ENCODE measurements at regions of chr15 and their contacts with region 1.

Region 1: DNA sequence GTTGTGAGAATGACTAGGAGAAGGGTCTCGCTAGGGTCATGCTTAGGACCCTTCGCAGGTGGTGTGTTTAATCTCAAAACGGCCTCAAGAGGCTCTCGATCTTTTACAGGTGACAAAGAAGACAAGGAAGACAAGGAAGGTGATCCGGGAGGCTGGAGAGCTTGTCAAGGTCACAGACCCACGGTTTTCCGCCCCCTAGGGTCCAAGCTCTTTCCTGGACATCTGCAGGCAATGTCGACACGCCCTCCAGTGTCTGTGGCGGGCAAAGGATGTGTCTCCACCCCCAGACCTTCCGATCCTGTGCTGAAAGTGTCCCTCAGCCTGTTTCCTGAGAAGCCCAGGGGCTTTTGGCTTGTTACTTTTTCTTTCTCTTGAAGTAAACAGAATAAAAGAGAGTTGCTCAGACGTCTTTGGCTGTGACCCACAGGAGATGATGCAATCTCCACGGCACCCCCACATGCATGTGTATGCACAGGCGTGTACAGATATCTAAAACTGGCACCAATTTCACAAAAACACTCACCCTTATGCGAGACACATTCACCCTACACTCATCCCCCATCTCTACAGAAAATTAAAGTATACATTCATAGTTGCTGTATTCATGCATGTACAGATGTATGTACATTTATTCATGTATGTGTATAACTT is 108.8 kb downstream of the KLF13 start:
- DNase-seq: peak; percentile 84 to 95 (median 86)
- H3K4me3 ChIP-seq: peak overlapping the region; percentile 25 to 74
- H3K4me3 Mint-ChIP-seq: peak overlapping the region; percentile 82 to 92 (median 87)
- H3K27ac ChIP-seq: peak overlapping the region; percentile 86
- H3K27ac Mint-ChIP-seq: peak overlapping the region; percentile 93 to 99 (median 98)
- H3K4me1 ChIP-seq: peaks cover 74% of the 10 kb centered on the region
- H3K4me1 Mint-ChIP-seq: peaks cover 58 to 87% (median 69%) of the 10 kb centered on the region in 4 donors
- H3K27me3 ChIP-seq: no peaks in the 10 kb centered on the region
- H3K27me3 Mint-ChIP-seq: no peaks in the 10 kb centered on the region

Region 2: GRCh38 chr15:31200735-31201151 is 234.6 kb before region 1 on chr15:
- CTCF ChIA-PET with region 1: interaction called, 34 read pairs
- POLR2A ChIA-PET with region 1: interaction called, 12 read pairs
- intact Hi-C with region 1: loop called (anchors 1 kb)
- DNase-seq: peak; percentile 70 to 73 (median 71)
- H3K4me3 ChIP-seq: no peak overlapping the region
- H3K4me3 Mint-ChIP-seq: peak overlapping the region in 2 of 8 donors; percentile 20 to 26
- H3K27ac ChIP-seq: no peak overlapping the region
- H3K27ac Mint-ChIP-seq: peak overlapping the region in 4 of 7 donors; percentile 18 to 87 (median 38)
- H3K4me1 ChIP-seq: peaks cover 26% of the 10 kb centered on the region
- H3K4me1 Mint-ChIP-seq: peaks cover 9 to 30% (median 15%) of the 10 kb centered on the region in 4 donors
- H3K27me3 ChIP-seq: no peaks in the 10 kb centered on the region
- H3K27me3 Mint-ChIP-seq: no peaks in the 10 kb centered on the region

Region 3: GRCh38 chr15:31241888-31242522 is 193.4 kb before region 1 on chr15:
- CTCF ChIA-PET with region 1: no interaction called
- POLR2A ChIA-PET with region 1: interaction called, 11 read pairs
- intact Hi-C with region 1: no loop called
- DNase-seq: peak in 4 of 5 donors; percentile 54 to 83 (median 74)
- H3K4me3 ChIP-seq: no peak overlapping the region
- H3K4me3 Mint-ChIP-seq: peak overlapping the region in 5 of 8 donors; percentile 41 to 73 (median 63)
- H3K27ac ChIP-seq: peak overlapping the region; percentile 0
- H3K27ac Mint-ChIP-seq: peak overlapping the region in 6 of 7 donors; percentile 79 to 98 (median 94)
- H3K4me1 ChIP-seq: peaks cover 29% of the 10 kb centered on the region
- H3K4me1 Mint-ChIP-seq: peaks cover 24 to 50% (median 35%) of the 10 kb centered on the region in 4 donors
- H3K27me3 ChIP-seq: no peaks in the 10 kb centered on the region
- H3K27me3 Mint-ChIP-seq: no peaks in the 10 kb centered on the region

Region 4: DNA sequence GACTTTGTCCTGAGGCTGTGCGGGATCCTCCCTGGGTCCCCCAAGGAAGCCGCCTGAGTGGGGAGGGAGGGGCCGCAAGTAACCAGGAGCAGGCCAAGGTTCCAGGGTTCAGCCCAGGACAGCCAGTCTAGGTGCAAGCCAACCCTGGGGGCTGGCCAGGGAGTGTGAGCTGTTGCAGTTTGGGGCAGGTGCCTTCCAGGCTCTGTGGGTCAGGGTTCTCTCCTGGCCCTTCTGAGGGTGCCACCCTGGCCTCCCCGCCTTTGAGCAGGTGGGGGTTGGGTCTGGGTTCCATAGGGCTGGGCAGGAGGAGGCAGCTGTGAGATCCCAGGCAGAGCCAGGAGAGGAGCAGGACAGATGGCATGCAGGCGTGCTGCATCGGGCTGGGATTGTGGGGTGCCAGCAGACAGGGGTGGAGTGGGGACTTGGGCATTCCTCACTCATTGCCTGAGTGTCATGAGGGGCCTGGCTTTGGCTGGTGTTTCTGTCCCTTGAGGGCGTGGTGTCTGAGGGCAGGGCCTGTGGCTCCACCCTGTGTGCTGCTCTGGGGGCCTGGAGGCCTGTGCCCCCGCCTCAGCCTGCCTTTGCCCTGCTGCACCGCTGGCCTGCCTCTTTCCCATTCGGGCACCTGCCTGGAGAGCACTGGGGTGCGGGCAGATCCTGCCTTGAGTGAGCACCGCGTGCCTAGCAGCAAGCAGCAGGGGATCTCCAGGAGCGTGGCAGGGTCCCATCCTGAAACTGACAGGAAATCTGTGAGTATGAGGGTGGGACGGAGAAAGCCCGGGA is 90.4 kb before region 1 on chr15:
- CTCF ChIA-PET with region 1: interaction called, 10 read pairs
- POLR2A ChIA-PET with region 1: interaction called, 42 read pairs
- intact Hi-C with region 1: no loop called
- DNase-seq: peak in 1 of 5 donors; percentile 47
- H3K4me3 ChIP-seq: peak overlapping the region; percentile 54 to 60
- H3K4me3 Mint-ChIP-seq: peak overlapping the region; percentile 83 to 95 (median 90)
- H3K27ac ChIP-seq: peak overlapping the region; percentile 74
- H3K27ac Mint-ChIP-seq: peak overlapping the region; percentile 84 to 99 (median 98)
- H3K4me1 ChIP-seq: peaks cover 100% of the 10 kb centered on the region
- H3K4me1 Mint-ChIP-seq: peaks cover 70 to 100% (median 91%) of the 10 kb centered on the region in 4 donors
- H3K27me3 ChIP-seq: no peaks in the 10 kb centered on the region
- H3K27me3 Mint-ChIP-seq: no peaks in the 10 kb centered on the region

Region 5: DNA sequence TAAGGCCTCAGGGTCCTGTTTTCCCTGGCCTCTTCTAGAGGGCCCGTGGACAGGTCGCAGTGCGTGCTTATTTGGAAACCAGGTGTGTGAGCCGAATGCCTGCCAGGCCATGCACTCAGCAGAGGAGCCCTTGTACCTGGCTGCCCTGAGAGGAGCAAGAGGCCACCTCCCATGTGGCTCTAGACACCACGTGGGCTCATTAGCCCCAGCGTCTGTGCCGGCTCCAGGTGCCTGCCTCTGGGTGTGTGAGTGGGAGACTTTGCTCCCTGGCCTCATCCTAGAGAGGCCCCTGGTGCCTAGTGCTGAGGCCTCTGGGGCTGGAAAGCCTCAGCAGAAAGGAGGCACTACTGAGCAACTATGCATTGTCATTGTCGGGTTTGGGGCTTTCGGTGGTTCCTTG is 58.4 kb before region 1 on chr15:
- CTCF ChIA-PET with region 1: interaction called, 10 read pairs
- POLR2A ChIA-PET with region 1: interaction called, 11 read pairs
- intact Hi-C with region 1: no loop called
- DNase-seq: no peak
- H3K4me3 ChIP-seq: no peak overlapping the region
- H3K4me3 Mint-ChIP-seq: no peak overlapping the region
- H3K27ac ChIP-seq: no peak overlapping the region
- H3K27ac Mint-ChIP-seq: peak overlapping the region in 3 of 7 donors; percentile 35 to 75 (median 66)
- H3K4me1 ChIP-seq: peaks cover 35% of the 10 kb centered on the region
- H3K4me1 Mint-ChIP-seq: peaks cover 18 to 67% (median 40%) of the 10 kb centered on the region in 4 donors
- H3K27me3 ChIP-seq: no peaks in the 10 kb centered on the region
- H3K27me3 Mint-ChIP-seq: no peaks in the 10 kb centered on the region

Region 6: GRCh38 chr15:31396881-31397560 is 38.4 kb before region 1 on chr15:
- CTCF ChIA-PET with region 1: interaction called, 21 read pairs
- POLR2A ChIA-PET with region 1: interaction called, 169 read pairs
- intact Hi-C with region 1: loop called (anchors 1 kb)
- DNase-seq: no peak
- H3K4me3 ChIP-seq: no peak overlapping the region
- H3K4me3 Mint-ChIP-seq: no peak overlapping the region
- H3K27ac ChIP-seq: no peak overlapping the region
- H3K27ac Mint-ChIP-seq: no peak overlapping the region
- H3K4me1 ChIP-seq: peaks cover 15% of the 10 kb centered on the region
- H3K4me1 Mint-ChIP-seq: peaks cover 10 to 41% (median 17%) of the 10 kb centered on the region in 4 donors
- H3K27me3 ChIP-seq: no peaks in the 10 kb centered on the region
- H3K27me3 Mint-ChIP-seq: no peaks in the 10 kb centered on the region

Region 7: GRCh38 chr15:31483053-31483985 is 47.9 kb after region 1 on chr15:
- CTCF ChIA-PET with region 1: interaction called, 174 read pairs
- POLR2A ChIA-PET with region 1: interaction called, 128 read pairs
- intact Hi-C with region 1: loop called (anchors 1 kb)
- DNase-seq: peak; percentile 48 to 64 (median 56)
- H3K4me3 ChIP-seq: peak overlapping the region in 1 of 2 donors; percentile 29
- H3K4me3 Mint-ChIP-seq: peak overlapping the region; percentile 91 to 96 (median 96)
- H3K27ac ChIP-seq: no peak overlapping the region
- H3K27ac Mint-ChIP-seq: peak overlapping the region; percentile 75 to 97 (median 92)
- H3K4me1 ChIP-seq: peaks cover 46% of the 10 kb centered on the region
- H3K4me1 Mint-ChIP-seq: peaks cover 21 to 69% (median 39%) of the 10 kb centered on the region in 4 donors
- H3K27me3 ChIP-seq: no peaks in the 10 kb centered on the region
- H3K27me3 Mint-ChIP-seq: no peaks in the 10 kb centered on the region

Measured in CD4-positive, alpha-beta memory T cell (primary cell).